IMR-90 (cell line): ENCODE measurements at regions of chr5 and their contacts with region 1.

Region 1: GRCh38 chr5:159459951-159460538 is 129.8 kb upstream of the IL12B start:
- DNase-seq: peak; percentile 40
- ATAC-seq: peak; percentile 33
- H3K4me3 ChIP-seq: no peak overlapping the region
- H3K27ac ChIP-seq: no peak overlapping the region
- H3K4me1 ChIP-seq: peaks cover 15% of the 10 kb centered on the region
- H3K27me3 ChIP-seq: no peaks in the 10 kb centered on the region
- CTCF ChIP-seq: no peak
- POLR2A ChIP-seq: no peak
- RAD21 ChIP-seq: no peak

Region 2: GRCh38 chr5:159504857-159505304 is 44.8 kb after region 1 on chr5:
- CTCF ChIA-PET with region 1: no interaction called
- POLR2A ChIA-PET with region 1: no interaction called
- dilution Hi-C with region 1: no loop called
- in situ Hi-C with region 1: no loop called
- intact Hi-C with region 1: loop called (anchors 5 kb)
- DNase-seq: peak; percentile 78
- ATAC-seq: peak; percentile 76
- H3K4me3 ChIP-seq: no peak overlapping the region
- H3K27ac ChIP-seq: peak overlapping the region; percentile 46
- H3K4me1 ChIP-seq: peaks cover 11% of the 10 kb centered on the region
- H3K27me3 ChIP-seq: no peaks in the 10 kb centered on the region
- CTCF ChIP-seq: no peak
- POLR2A ChIP-seq: no peak
- RAD21 ChIP-seq: no peak